ENCODE measurements at regions of chr11 and their contacts with region 1.

Region 1: GRCh38 chr11:9972989-9973388 is 309.1 kb downstream of the SWAP70 start:
- DNase-seq: no peak
- ATAC-seq: peak; percentile 80

Region 2: DNA sequence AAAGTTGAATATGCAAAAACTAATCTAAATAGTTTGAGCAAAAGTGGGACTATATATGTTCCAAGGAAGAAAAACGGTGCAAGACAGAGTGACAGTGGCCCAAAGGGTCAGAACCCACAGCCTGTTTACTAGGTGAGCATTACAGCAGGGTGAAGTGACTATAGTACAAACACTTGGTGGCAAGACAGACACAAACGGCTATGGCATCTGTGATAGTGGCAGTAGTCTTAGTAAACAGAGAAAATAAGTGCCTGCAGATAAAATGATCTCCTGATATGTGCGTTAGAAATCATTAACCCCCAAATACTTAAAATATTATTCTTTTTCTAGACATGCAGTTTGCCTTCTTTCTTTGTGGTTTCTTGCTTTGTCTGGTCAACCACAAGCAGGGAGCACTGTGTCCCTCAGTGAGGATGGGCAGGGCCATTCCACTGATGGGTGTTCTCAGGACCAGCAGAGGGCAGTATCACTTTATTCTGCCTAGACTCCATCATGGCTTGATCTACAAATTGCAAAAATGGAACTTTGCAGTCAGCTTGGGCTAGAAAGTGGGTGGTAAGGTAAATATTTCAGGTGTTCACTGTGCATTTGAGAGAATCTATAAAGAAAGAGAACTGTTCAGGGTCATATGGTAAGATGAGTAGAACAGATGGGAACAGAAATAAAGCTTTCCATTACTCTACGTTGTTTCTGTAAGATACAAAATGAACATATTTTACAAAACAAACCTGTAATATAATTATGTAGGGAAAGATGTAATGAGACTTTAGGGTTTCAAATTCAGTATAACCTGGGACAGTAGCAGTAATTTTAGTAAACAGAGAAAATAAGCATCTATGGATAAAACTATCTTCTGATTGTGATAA is 110.9 kb before region 1 on chr11:
- intact Hi-C with region 1: loop called (anchors 10 kb)
- DNase-seq: no peak
- ATAC-seq: peak; percentile 70

Region 3: GRCh38 chr11:10026514-10026913 is 53.5 kb after region 1 on chr11:
- intact Hi-C with region 1: no loop called
- DNase-seq: no peak
- ATAC-seq: no peak

Region 4: GRCh38 chr11:10322830-10323792 is 350.1 kb after region 1 on chr11:
- intact Hi-C with region 1: loop called (anchors 5 kb)
- DNase-seq: no peak
- ATAC-seq: peak; percentile 49

Region 5: GRCh38 chr11:10742471-10743208 is 769.7 kb after region 1 on chr11:
- intact Hi-C with region 1: loop called (anchors 5 kb)
- DNase-seq: no peak
- ATAC-seq: no peak

Measured in Right ventricle myocardium inferior (tissue), 1 donor.